Esophagus muscularis mucosa (tissue), 4 donors: ENCODE measurements at regions of chr11 and their contacts with region 1.

Region 1: DNA sequence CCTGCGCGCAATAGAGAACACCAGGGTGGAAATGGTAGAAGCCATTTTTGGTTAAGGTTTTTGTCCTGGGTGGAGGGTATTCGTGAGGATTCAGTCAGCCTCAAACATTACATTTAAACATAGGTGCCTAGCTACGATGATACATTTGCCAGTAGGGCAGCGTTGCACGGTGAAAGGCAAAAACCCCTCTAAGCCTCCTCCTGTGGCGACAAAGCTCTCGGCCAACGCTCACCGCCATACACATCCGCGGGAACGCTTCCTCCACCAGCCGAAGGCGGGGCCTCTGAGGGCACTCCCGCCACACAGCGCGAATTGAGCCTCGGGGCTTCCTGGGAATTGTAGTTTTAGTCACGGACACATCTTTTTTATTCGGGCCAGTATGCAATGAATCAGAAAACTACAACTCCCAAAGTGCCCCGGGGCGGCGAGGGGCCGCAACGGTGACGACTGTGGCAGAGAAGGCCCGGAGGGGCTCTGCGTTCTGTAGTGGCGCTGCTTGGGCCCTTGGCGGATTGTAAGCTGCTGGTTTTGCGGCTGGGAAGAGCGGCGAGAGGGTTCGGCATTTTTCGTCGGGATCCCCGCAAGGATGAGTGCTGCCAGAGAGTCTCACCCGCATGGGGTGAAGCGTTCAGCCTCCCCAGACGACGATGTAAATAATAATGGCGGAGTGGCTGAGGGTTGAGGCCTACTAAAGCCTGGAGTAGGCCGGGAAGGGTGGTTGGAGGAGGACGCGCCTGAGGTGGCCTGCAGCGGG is at the start of gene C11orf58:
- DNase-seq: peak; percentile 98
- H3K4me3 ChIP-seq: peak within 1 kb of the TSS; percentile 64 to 84 (median 79)
- H3K27ac ChIP-seq: peak within 1 kb of the TSS; percentile 90 to 96 (median 92)
- H3K4me1 ChIP-seq: peaks cover 38 to 47% (median 44%) of the 10 kb centered on the region in 4 donors
- H3K27me3 ChIP-seq: no peaks in the 10 kb centered on the region
- CTCF ChIP-seq: no peak
- EP300 ChIP-seq: no peak
- POLR2A ChIP-seq: peak; percentile 93
- total RNA-seq, gene C11orf58: 144 to 202 (median 175) TPM

Region 2: DNA sequence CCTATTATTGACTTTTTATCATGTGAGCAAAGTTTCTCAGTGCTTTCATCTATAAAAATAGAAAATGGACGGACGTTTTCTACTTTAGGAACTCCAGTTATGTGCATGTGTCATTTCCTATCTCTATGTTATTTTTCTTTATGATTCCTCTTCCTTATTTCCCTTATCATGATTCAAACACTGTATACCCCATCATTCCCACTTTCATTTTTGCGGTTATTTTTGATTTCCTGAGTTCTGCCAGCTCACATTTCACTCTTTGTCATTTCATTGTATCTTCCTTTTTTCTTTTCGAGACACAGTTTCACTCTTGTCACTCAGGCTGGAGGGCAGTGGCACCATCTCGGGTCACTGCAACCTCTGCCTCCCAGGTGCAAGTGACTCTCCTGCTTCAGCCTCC is 21.5 kb after region 1 on chr11:
- intact Hi-C with region 1: no loop called
- DNase-seq: no peak
- H3K4me3 ChIP-seq: no peak overlapping the region
- H3K27ac ChIP-seq: no peak overlapping the region
- H3K4me1 ChIP-seq: no peaks in the 10 kb centered on the region
- H3K27me3 ChIP-seq: no peaks in the 10 kb centered on the region
- CTCF ChIP-seq: no peak
- EP300 ChIP-seq: no peak
- POLR2A ChIP-seq: no peak

Region 3: GRCh38 chr11:17077520-17078401 is 339.4 kb after region 1 on chr11 and contains the start of gene RPS13:
- intact Hi-C with region 1: loop called (anchors 2 kb)
- DNase-seq: peak; percentile 99
- H3K4me3 ChIP-seq: peak within 1 kb of the TSS; percentile 66 to 78 (median 74)
- H3K27ac ChIP-seq: peak within 1 kb of the TSS; percentile 89 to 93 (median 90)
- H3K4me1 ChIP-seq: peaks cover 29 to 37% (median 32%) of the 10 kb centered on the region in 4 donors
- H3K27me3 ChIP-seq: no peaks in the 10 kb centered on the region
- CTCF ChIP-seq: no peak
- EP300 ChIP-seq: no peak
- POLR2A ChIP-seq: peak; percentile 65
- total RNA-seq, gene RPS13: 828 to 2,253 (median 1,546) TPM